H1 (cell line): ENCODE measurements at regions of chr12 and their contacts with region 1.

Region 1: GRCh38 chr12:3313675-3314663 is 177.0 kb upstream of the PRMT8 start:
- DNase-seq: no peak
- H3K4me3 ChIP-seq: no peak overlapping the region
- H3K27ac ChIP-seq: no peak overlapping the region
- H3K4me1 ChIP-seq: peaks cover 0 to 3% (median 0%) of the 10 kb centered on the region in 4 experiments; a peak in 2 of 7 replicates
- H3K27me3 ChIP-seq: no peaks in the 10 kb centered on the region; a peak in 2 of 7 replicates
- CTCF ChIP-seq: peak in 2 of 3 experiments; percentile 84 to 86; a peak in 3 of 4 replicates
- EP300 ChIP-seq: no peak
- POLR2A ChIP-seq: no peak
- RAD21 ChIP-seq: peak; percentile 76 to 82

Region 2: GRCh38 chr12:3336606-3337311 is 22.8 kb after region 1 on chr12:
- CTCF ChIA-PET with region 1: interaction called, 216 read pairs
- POLR2A ChIA-PET with region 1: interaction called, 4 read pairs
- DNase-seq: no peak
- H3K4me3 ChIP-seq: no peak overlapping the region
- H3K27ac ChIP-seq: no peak overlapping the region
- H3K4me1 ChIP-seq: peaks cover 4 to 19% (median 8%) of the 10 kb centered on the region in 4 experiments
- H3K27me3 ChIP-seq: peaks cover 0 to 1% (median 0%) of the 10 kb centered on the region in 4 experiments; a peak in 1 of 7 replicates
- CTCF ChIP-seq: no peak
- EP300 ChIP-seq: no peak
- POLR2A ChIP-seq: no peak
- RAD21 ChIP-seq: no peak

Region 3: GRCh38 chr12:3350422-3350821 is 36.5 kb after region 1 on chr12:
- CTCF ChIA-PET with region 1: interaction called, 53 read pairs
- POLR2A ChIA-PET with region 1: no interaction called
- DNase-seq: no peak
- H3K4me3 ChIP-seq: no peak overlapping the region
- H3K27ac ChIP-seq: no peak overlapping the region
- H3K4me1 ChIP-seq: no peaks in the 10 kb centered on the region; a peak in 1 of 7 replicates
- H3K27me3 ChIP-seq: no peaks in the 10 kb centered on the region
- CTCF ChIP-seq: peak in 1 of 3 experiments; percentile 13; a peak in 1 of 4 replicates
- EP300 ChIP-seq: no peak
- POLR2A ChIP-seq: no peak
- RAD21 ChIP-seq: no peak

Region 4: DNA sequence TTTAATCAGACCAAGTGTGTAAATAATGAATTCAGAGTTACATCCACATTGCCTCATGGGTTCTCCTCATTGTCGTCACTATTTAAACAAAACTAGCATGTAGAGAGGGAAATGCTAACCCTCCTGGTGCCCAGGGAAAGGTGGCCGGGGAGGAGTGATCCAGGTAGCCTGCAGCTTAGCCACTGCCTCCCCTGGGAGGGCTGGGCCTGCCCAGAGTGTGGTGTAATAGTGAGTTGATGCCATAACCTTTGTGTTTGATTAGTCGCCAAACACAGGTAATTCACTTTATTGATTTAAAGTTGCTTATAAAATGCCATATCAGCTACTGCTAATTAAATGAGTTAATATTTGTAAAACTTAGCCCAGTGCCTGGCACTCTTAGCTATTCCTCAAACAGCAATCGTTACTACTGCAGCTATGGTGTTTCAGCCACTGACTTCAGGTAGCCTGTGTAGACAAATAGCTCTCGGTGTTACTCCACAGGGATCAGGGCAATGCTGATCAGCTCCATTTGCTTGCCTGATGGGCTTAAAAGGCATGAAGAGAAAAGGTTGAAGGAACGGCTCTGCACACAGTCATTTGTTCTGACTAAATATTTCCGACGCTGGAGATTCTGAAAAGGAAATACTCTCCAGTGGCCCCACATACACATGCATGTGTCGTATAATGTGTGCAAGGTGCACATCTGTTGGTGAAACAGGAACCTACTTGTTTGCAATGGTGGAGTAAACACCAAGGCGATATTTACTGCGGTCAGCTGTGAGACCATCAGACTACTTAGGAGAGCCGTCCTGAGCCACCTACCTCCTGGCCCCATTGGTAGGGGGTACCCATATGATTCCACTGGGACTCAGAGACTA is 131.4 kb after region 1 on chr12:
- CTCF ChIA-PET with region 1: interaction called, 12 read pairs
- POLR2A ChIA-PET with region 1: no interaction called
- DNase-seq: no peak
- H3K4me3 ChIP-seq: no peak overlapping the region
- H3K27ac ChIP-seq: no peak overlapping the region
- H3K4me1 ChIP-seq: peaks cover 0 to 4% (median 2%) of the 10 kb centered on the region in 4 experiments; a peak in 2 of 7 replicates
- H3K27me3 ChIP-seq: no peaks in the 10 kb centered on the region
- CTCF ChIP-seq: no peak
- EP300 ChIP-seq: no peak
- POLR2A ChIP-seq: no peak
- RAD21 ChIP-seq: no peak

Region 5: GRCh38 chr12:3658327-3659163 is 344.6 kb after region 1 on chr12:
- CTCF ChIA-PET with region 1: interaction called, 12 read pairs
- POLR2A ChIA-PET with region 1: no interaction called
- DNase-seq: peak; percentile 21 to 68
- H3K4me3 ChIP-seq: no peak overlapping the region
- H3K27ac ChIP-seq: no peak overlapping the region
- H3K4me1 ChIP-seq: peaks cover 0 to 10% (median 2%) of the 10 kb centered on the region in 4 experiments; a peak in 2 of 7 replicates
- H3K27me3 ChIP-seq: no peaks in the 10 kb centered on the region
- CTCF ChIP-seq: peak; percentile 68 to 84 (median 77)
- EP300 ChIP-seq: no peak
- POLR2A ChIP-seq: no peak
- RAD21 ChIP-seq: peak; percentile 60 to 68

Region 6: GRCh38 chr12:3770886-3771285 is 456.9 kb after region 1 on chr12:
- CTCF ChIA-PET with region 1: interaction called, 18 read pairs
- POLR2A ChIA-PET with region 1: no interaction called
- DNase-seq: no peak
- H3K4me3 ChIP-seq: no peak overlapping the region
- H3K27ac ChIP-seq: no peak overlapping the region
- H3K4me1 ChIP-seq: peaks cover 0 to 4% (median 0%) of the 10 kb centered on the region in 4 experiments; a peak in 1 of 7 replicates
- H3K27me3 ChIP-seq: no peaks in the 10 kb centered on the region
- CTCF ChIP-seq: no peak
- EP300 ChIP-seq: no peak
- POLR2A ChIP-seq: no peak
- RAD21 ChIP-seq: no peak